ENCODE measurements at regions of chr4 and their contacts with region 1.

Region 1: GRCh38 chr4:173257732-173258717 is 76.1 kb downstream of the HMGB2 start:
- DNase-seq: no peak
- ATAC-seq: peak; percentile 92

Region 2: GRCh38 chr4:173013232-173013930 is 244.6 kb before region 1 on chr4:
- intact Hi-C with region 1: loop called (anchors 1 kb)
- DNase-seq: no peak
- ATAC-seq: peak; percentile 56

Region 3: GRCh38 chr4:173025131-173025530 is 232.9 kb before region 1 on chr4:
- intact Hi-C with region 1: loop called (anchors 2 kb)
- DNase-seq: no peak
- ATAC-seq: peak; percentile 76

Region 4: DNA sequence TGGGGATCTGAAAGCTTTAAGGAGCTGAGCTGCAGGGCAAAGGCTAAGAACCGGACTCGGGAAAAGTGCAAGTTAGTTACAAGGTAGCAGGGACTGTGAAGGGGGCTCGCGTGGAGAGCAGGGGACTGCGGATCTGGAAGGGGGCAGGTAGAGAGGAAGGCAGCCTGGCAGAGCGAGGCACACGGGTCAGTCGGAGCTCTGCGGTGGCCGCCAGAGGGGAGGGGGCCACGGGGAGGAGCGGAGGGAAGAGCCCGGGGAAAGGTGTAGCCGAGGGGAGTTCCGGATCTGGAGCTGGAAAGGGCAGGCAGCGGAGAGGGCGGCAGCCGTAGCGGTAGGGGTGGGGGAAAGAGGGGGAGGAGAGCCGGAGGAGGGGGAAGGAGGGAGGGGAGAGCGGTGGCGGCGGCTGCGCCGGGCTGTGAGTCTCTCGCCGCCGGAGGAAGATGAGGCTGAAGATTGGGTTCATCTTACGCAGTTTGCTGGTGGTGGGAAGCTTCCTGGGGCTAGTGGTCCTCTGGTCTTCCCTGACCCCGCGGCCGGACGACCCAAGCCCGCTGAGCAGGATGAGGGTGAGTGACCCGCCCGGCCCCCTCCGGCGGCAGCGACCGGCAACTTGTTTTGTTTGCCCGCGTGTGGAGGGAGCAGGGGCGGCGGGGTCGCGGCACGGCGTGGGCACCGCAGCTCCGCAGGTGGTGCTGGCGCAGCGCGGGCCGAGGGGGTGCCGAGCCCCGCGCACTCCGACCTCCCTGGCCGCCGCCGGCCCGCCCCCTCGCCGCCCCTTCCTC is 89.4 kb before region 1 on chr4 and contains the start of gene GALNT7:
- intact Hi-C with region 1: loop called (anchors 5 kb)
- DNase-seq: peak; percentile 84
- ATAC-seq: peak; percentile 72
- total RNA-seq, gene GALNT7: 5.1 TPM

Region 5: GRCh38 chr4:174474462-174475189 is 1216.6 kb after region 1 on chr4:
- intact Hi-C with region 1: no loop called
- DNase-seq: no peak
- ATAC-seq: no peak

Measured in Right ventricle myocardium inferior (tissue), 1 donor.